HepG2 (cell line): ENCODE measurements at regions of chr2 and their contacts with region 1.

Region 1: DNA sequence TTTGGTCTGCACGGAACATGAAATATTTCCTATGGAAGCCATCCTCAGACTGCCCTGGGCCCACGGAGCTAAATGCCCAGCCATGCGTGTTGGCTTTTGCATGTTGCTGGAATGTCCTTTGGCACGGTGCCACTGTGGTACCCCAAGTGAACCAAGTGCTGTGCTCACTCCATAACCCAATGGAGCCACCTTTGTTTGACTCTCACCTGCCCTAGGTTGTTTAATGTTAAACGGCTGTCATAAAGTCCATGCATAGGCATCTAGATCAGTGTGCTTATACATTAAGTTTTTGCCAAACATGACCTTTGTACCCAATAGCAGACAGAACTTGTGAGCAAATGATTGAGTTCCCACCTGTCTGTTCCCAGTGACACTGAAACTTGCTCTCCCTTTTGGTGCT is 59.9 kb upstream of the TMEM87B start:
- DNase-seq: peak; percentile 87
- ATAC-seq: peak; percentile 89
- H3K4me3 ChIP-seq: no peak overlapping the region
- H3K27ac ChIP-seq: peak overlapping the region; percentile 13
- H3K4me1 ChIP-seq: peaks cover 31% of the 10 kb centered on the region
- H3K27me3 ChIP-seq: no peaks in the 10 kb centered on the region
- CTCF ChIP-seq: no peak
- EP300 ChIP-seq: peak in 1 of 2 experiments; percentile 62; a peak in 1 of 4 replicates
- POLR2A ChIP-seq: no peak
- RAD21 ChIP-seq: peak; percentile 24; the same call in 1 of the 2 replicates

Region 2: GRCh38 chr2:111919794-111920608 is 75.1 kb before region 1 on chr2:
- CTCF ChIA-PET with region 1: no interaction called
- POLR2A ChIA-PET with region 1: no interaction called
- in situ Hi-C with region 1: no loop called
- intact Hi-C with region 1: loop called (anchors 1 kb)
- DNase-seq: peak; percentile 94
- ATAC-seq: peak; percentile 96
- H3K4me3 ChIP-seq: peak overlapping the region; percentile 3 to 58 (median 15)
- H3K27ac ChIP-seq: peak overlapping the region; percentile 87
- H3K4me1 ChIP-seq: peaks cover 44% of the 10 kb centered on the region
- H3K27me3 ChIP-seq: no peaks in the 10 kb centered on the region
- CTCF ChIP-seq: peak; percentile 50
- EP300 ChIP-seq: peak in 1 of 2 experiments; percentile 76; a peak in 2 of 4 replicates
- POLR2A ChIP-seq: peak; percentile 84 to 91
- RAD21 ChIP-seq: peak; percentile 37

Region 3: DNA sequence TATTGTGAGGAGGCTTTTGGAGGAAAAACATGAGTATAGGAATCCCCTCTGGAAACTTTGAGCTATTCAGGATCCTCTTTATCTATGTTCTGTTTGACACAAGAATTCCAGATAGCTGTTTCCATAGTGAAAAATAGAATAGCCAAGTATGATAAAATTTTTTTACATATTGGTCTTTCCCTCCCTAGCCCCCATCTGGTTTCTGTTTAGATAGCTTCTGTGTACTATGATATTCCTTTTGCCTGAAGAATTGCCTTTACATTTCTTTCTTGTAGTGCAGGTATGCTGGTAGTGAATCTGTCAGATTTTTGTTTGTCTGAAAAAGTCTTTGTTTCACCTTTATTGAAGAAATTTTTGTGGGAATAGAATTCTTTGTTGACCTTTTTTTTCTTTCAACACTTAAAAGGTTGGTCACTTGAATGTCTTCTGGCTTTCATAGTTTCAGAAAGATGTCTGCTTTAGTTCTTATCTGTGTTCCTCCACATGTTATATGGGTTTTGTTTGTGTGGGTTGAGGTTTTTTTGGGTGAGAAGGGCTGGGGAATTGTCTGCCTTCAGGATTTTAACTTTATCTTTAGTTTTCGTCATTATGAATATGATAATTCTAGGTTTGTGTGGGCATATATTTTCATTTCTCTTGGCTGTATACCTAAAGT is 113.2 kb after region 1 on chr2:
- CTCF ChIA-PET with region 1: no interaction called
- POLR2A ChIA-PET with region 1: no interaction called
- in situ Hi-C with region 1: no loop called
- intact Hi-C with region 1: no loop called
- DNase-seq: no peak
- ATAC-seq: no peak
- H3K4me3 ChIP-seq: no peak overlapping the region
- H3K27ac ChIP-seq: no peak overlapping the region
- H3K4me1 ChIP-seq: no peaks in the 10 kb centered on the region
- H3K27me3 ChIP-seq: no peaks in the 10 kb centered on the region
- CTCF ChIP-seq: no peak
- EP300 ChIP-seq: no peak
- POLR2A ChIP-seq: no peak
- RAD21 ChIP-seq: no peak